ENCODE measurements at regions of chrX and their contacts with region 1.

Region 1: GRCh38 chrX:103398421-103398864 is 22.1 kb downstream of the BEX3 start:
- DNase-seq: peak; percentile 80
- H3K4me3 Mint-ChIP-seq: no peak overlapping the region
- H3K27ac Mint-ChIP-seq: peak overlapping the region; percentile 35
- H3K4me1 Mint-ChIP-seq: no peaks in the 10 kb centered on the region
- H3K27me3 Mint-ChIP-seq: peaks cover 31% of the 10 kb centered on the region
- CTCF ChIP-seq: no peak

Region 2: GRCh38 chrX:103240155-103240554 is 158.3 kb before region 1 on chrX:
- CTCF ChIA-PET with region 1: no interaction called
- POLR2A ChIA-PET with region 1: no interaction called
- intact Hi-C with region 1: no loop called
- DNase-seq: no peak
- H3K4me3 Mint-ChIP-seq: no peak overlapping the region
- H3K27ac Mint-ChIP-seq: no peak overlapping the region
- H3K4me1 Mint-ChIP-seq: no peaks in the 10 kb centered on the region
- H3K27me3 Mint-ChIP-seq: peaks cover 30% of the 10 kb centered on the region
- CTCF ChIP-seq: no peak

Region 3: DNA sequence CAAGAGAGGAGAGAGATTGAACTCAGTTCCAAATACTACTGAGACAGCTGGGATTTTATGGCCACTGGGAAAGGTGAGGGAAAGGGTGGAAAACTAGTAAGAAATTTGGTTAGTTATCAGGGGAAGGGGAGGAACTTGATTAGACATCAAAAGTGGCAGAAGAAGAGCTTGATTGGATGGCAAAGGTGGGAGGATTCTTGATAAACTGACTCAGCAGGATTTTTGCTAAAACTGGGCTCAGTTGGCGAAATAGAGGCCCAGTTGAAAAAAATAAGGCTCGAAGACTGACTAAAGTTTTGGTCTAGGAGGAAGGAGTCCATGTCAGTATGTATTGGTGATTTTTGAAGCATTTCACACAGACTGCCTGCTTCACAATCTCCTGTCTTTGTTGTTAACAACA is 12.1 kb before region 1 on chrX:
- CTCF ChIA-PET with region 1: no interaction called
- POLR2A ChIA-PET with region 1: interaction called, 15 read pairs
- intact Hi-C with region 1: no loop called
- DNase-seq: no peak
- H3K4me3 Mint-ChIP-seq: no peak overlapping the region
- H3K27ac Mint-ChIP-seq: peak overlapping the region; percentile 66
- H3K4me1 Mint-ChIP-seq: peaks cover 6% of the 10 kb centered on the region
- H3K27me3 Mint-ChIP-seq: peaks cover 74% of the 10 kb centered on the region
- CTCF ChIP-seq: no peak

Measured in MCF 10A (cell line).